ENCODE measurements at regions of chr17 and their contacts with region 1.

Region 1: GRCh38 chr17:50638851-50639767 is 4.4 kb downstream of the ABCC3 start:
- DNase-seq: peak; percentile 96
- ATAC-seq: peak; percentile 81
- H3K4me3 ChIP-seq: peak overlapping the region in 1 of 2 experiments; percentile 32; a peak in 2 of 4 replicates
- H3K27ac ChIP-seq: peak overlapping the region; percentile 100
- H3K4me1 ChIP-seq: peaks cover 88% of the 10 kb centered on the region
- H3K27me3 ChIP-seq: no peaks in the 10 kb centered on the region
- CTCF ChIP-seq: no peak

Region 2: DNA sequence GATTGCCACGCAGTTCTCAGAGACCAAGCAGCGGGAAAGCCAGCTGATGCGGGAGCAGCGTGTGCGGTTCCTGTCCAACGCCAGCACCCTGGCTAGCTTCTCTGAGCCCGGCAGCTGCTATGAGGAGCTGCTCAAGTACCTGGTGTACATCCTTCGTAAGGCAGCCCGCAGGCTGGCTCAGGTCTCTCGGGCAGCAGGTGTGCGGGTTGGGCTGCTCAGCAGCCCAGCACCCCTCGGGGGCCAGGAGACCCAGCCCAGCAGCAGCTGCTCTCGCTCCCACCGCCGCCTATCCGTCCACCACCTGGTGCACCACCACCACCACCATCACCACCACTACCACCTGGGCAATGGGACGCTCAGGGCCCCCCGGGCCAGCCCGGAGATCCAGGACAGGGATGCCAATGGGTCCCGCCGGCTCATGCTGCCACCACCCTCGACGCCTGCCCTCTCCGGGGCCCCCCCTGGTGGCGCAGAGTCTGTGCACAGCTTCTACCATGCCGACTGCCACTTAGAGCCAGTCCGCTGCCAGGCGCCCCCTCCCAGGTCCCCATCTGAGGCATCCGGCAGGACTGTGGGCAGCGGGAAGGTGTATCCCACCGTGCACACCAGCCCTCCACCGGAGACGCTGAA is 63.4 kb before region 1 on chr17:
- CTCF ChIA-PET with region 1: no interaction called
- POLR2A ChIA-PET with region 1: no interaction called
- in situ Hi-C with region 1: no loop called
- intact Hi-C with region 1: no loop called
- DNase-seq: no peak
- ATAC-seq: no peak
- H3K4me3 ChIP-seq: no peak overlapping the region
- H3K27ac ChIP-seq: no peak overlapping the region
- H3K4me1 ChIP-seq: no peaks in the 10 kb centered on the region
- H3K27me3 ChIP-seq: no peaks in the 10 kb centered on the region
- CTCF ChIP-seq: no peak

Region 3: GRCh38 chr17:50613007-50613992 is 25.8 kb before region 1 on chr17:
- CTCF ChIA-PET with region 1: no interaction called
- POLR2A ChIA-PET with region 1: no interaction called
- in situ Hi-C with region 1: no loop called
- intact Hi-C with region 1: no loop called
- DNase-seq: no peak
- ATAC-seq: no peak
- H3K4me3 ChIP-seq: no peak overlapping the region
- H3K27ac ChIP-seq: no peak overlapping the region
- H3K4me1 ChIP-seq: no peaks in the 10 kb centered on the region
- H3K27me3 ChIP-seq: no peaks in the 10 kb centered on the region
- CTCF ChIP-seq: no peak

Region 4: DNA sequence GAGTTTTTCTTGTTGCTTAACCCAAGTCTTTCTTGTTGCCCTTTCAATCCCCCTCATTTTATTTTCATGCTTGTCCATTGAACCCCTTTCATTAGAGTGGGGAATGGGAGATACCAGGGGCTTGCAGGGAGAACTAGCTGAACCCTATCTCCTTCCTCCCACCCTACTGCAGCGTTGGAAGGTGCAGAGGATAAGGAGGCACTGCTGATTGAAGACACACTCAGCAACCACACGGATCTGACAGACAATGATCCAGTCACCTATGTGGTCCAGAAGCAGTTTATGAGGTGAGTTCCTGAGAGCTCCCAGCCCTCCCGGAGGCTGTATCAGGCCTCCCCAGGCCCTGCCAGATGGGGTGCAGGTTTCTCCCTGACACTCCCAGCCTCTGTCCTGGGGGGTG is 36.1 kb after region 1 on chr17:
- CTCF ChIA-PET with region 1: no interaction called
- POLR2A ChIA-PET with region 1: interaction called, 12 read pairs
- in situ Hi-C with region 1: no loop called
- intact Hi-C with region 1: no loop called
- DNase-seq: no peak
- ATAC-seq: no peak
- H3K4me3 ChIP-seq: no peak overlapping the region
- H3K27ac ChIP-seq: no peak overlapping the region
- H3K4me1 ChIP-seq: no peaks in the 10 kb centered on the region
- H3K27me3 ChIP-seq: no peaks in the 10 kb centered on the region
- CTCF ChIP-seq: no peak

Region 5: GRCh38 chr17:50763716-50764475 is 124.8 kb after region 1 on chr17:
- CTCF ChIA-PET with region 1: no interaction called
- POLR2A ChIA-PET with region 1: no interaction called
- in situ Hi-C with region 1: no loop called
- intact Hi-C with region 1: no loop called
- DNase-seq: no peak
- ATAC-seq: no peak
- H3K4me3 ChIP-seq: no peak overlapping the region
- H3K27ac ChIP-seq: no peak overlapping the region
- H3K4me1 ChIP-seq: no peaks in the 10 kb centered on the region
- H3K27me3 ChIP-seq: no peaks in the 10 kb centered on the region
- CTCF ChIP-seq: no peak